ENCODE measurements at regions of chr21 and their contacts with region 1.

Region 1: DNA sequence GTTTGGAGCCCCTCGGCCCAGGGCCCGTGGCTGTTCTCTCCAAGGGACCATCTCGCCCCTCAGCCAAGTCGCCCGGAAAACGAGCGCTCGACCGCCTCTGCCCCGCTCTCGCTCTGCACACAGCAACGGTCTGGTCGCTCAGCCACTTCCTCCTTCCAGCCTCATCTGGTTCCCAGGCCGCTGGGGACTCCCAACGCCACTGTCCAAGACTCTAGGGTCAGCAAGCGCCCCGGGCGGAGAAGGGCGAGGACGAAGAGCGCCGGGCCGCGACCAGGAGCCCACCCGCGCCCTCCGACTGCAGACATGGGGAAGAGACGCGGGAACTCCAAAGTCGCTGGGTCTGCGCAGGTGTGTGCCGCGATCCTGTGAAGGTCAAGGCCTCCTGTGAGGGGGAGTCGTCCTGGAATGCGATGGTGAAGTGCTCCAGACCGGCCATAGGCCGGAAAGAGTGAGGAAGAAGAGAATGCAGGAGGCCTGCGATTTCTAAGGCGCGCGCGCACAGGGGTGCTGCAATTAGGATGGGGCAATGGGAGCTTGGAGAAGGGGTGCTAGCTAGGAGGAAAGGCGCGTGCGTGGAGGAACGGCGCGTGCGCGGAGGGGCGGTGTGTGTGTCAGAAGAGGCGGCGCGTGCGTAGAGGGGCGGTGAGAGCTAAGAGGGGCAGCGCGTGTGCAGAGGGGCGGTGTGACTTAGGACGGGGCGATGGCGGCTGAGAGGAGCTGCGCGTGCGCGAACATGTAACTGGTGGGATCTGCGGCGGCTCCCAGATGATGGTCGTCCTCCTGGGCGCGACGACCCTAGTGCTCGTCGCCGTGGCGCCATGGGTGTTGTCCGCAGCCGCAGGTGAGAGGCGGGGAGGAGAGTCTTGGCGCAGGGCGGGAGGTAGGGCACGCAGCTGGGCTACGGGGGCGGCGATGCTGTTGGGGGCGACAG is at the start of gene IFNAR1:
- DNase-seq: peak; percentile 97
- ATAC-seq: peak; percentile 80
- H3K4me3 Mint-ChIP-seq: no peak within 1 kb of the TSS
- H3K27ac Mint-ChIP-seq: no peak within 1 kb of the TSS
- H3K4me1 Mint-ChIP-seq: peaks cover 32% of the 10 kb centered on the region
- H3K27me3 Mint-ChIP-seq: no peaks in the 10 kb centered on the region
- CTCF ChIP-seq: no peak
- total RNA-seq, gene IFNAR1: 33.9 and 34.5 TPM in 2 replicates

Region 2: DNA sequence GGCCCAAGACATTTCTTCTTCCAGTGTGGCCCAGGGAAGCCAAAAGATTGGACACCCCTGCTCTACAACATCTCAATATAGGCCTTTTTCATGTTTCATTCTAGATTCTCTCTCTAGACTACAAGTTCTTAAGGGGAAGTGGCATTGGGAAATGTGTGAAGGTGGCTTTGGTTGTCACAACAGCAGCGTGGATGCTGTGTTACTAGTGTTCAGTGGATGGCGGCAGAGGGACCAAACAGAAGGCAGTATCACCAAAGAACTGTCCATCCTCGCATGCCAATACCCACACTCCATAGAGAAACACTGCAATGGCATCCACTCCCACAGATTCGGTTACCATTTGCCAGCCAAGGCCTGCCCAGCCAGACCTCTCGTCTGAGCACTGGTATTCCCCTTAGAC is 119.1 kb before region 1 on chr21:
- CTCF ChIA-PET with region 1: interaction called, 3 read pairs
- POLR2A ChIA-PET with region 1: interaction called, 16 read pairs
- intact Hi-C with region 1: loop called (anchors 1 kb)
- DNase-seq: no peak
- ATAC-seq: peak; percentile 16
- H3K4me3 Mint-ChIP-seq: peak overlapping the region; percentile 73
- H3K27ac Mint-ChIP-seq: peak overlapping the region; percentile 94
- H3K4me1 Mint-ChIP-seq: peaks cover 53% of the 10 kb centered on the region
- H3K27me3 Mint-ChIP-seq: no peaks in the 10 kb centered on the region
- CTCF ChIP-seq: no peak

Region 3: DNA sequence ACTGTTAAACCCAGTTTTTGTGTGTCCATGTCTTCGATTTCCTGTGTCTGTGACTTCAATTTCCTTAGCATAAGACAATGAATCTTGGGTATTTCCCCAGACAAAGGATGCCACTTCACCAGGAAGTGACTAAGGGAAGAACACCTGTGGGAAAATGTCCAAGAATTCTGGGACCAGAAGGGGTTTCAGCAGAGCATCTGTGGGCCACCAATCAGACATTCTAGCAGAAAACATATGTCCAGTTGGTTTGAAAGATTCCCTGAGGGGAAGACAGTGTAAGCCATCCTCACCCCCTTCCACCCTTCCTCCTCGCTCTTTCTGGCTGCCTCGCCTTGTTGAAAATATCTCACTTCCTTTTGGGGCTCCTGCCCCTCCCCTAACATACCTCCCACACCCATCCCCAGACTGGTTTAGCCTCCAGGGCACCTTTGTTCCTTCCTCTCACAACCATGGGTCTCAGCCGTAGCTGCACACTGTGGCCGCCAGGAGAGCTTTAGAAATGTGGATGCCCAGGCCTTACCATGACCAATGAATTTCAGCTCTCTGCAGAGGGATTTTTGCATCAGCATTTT is 25.3 kb before region 1 on chr21:
- CTCF ChIA-PET with region 1: interaction called, 5 read pairs
- POLR2A ChIA-PET with region 1: interaction called, 25 read pairs
- intact Hi-C with region 1: loop called (anchors 1 kb)
- DNase-seq: peak; percentile 26
- ATAC-seq: peak; percentile 80
- H3K4me3 Mint-ChIP-seq: peak overlapping the region; percentile 59
- H3K27ac Mint-ChIP-seq: peak overlapping the region; percentile 80
- H3K4me1 Mint-ChIP-seq: peaks cover 82% of the 10 kb centered on the region
- H3K27me3 Mint-ChIP-seq: no peaks in the 10 kb centered on the region
- CTCF ChIP-seq: no peak

Region 4: DNA sequence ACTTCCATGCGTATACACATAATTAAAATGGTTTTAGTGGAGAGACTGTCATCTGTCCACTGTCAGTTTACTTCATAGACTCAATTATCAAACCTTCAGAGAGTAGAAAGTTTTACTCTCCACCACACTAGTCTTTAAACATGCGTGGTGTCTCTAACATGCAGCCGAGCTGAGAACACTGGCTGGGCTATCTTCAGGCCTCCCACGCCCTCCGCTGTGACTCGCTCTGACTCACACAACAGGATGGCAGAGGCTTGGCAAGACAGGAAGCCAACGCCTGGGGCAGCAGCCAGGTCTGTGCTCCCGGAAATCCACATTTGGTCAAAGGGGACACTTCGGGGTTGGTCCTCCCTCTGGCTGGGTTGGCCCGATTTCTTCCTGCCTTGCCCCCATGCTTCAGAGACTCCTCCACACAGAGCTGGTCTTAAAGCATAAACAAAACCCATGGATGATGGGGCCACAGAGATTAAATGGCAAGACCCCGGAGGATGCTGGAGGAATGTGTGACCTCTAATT is 56.0 kb after region 1 on chr21:
- CTCF ChIA-PET with region 1: no interaction called
- POLR2A ChIA-PET with region 1: interaction called, 23 read pairs
- intact Hi-C with region 1: loop called (anchors 1 kb)
- DNase-seq: peak; percentile 59
- ATAC-seq: peak; percentile 63
- H3K4me3 Mint-ChIP-seq: peak overlapping the region; percentile 59
- H3K27ac Mint-ChIP-seq: peak overlapping the region; percentile 97
- H3K4me1 Mint-ChIP-seq: peaks cover 84% of the 10 kb centered on the region
- H3K27me3 Mint-ChIP-seq: no peaks in the 10 kb centered on the region
- CTCF ChIP-seq: no peak

Region 5: GRCh38 chr21:33434770-33435360 is 110.3 kb after region 1 on chr21:
- CTCF ChIA-PET with region 1: interaction called, 6 read pairs
- POLR2A ChIA-PET with region 1: interaction called, 10 read pairs
- intact Hi-C with region 1: no loop called
- DNase-seq: no peak
- ATAC-seq: peak; percentile 90
- H3K4me3 Mint-ChIP-seq: peak overlapping the region; percentile 55
- H3K27ac Mint-ChIP-seq: peak overlapping the region; percentile 88
- H3K4me1 Mint-ChIP-seq: peaks cover 64% of the 10 kb centered on the region
- H3K27me3 Mint-ChIP-seq: no peaks in the 10 kb centered on the region
- CTCF ChIP-seq: no peak

Measured in activated B cell treated with CpG ODN at 0.5 μM for 24 hours (primary cell).